Activated T-helper 2 cell treated with anti-CD3 and anti-CD28 coated beads, Interferon-gamma antibody, Interleukin-2, Interleukin-4, amounts not matched to agents 10 μg/mL and 5 μg/mL and 100 μg/mL, durations not matched to agents 14 hours and 24 hours and 36 hours (primary cell): ENCODE measurements at regions of chr14 and their contacts with region 1.

Region 1: DNA sequence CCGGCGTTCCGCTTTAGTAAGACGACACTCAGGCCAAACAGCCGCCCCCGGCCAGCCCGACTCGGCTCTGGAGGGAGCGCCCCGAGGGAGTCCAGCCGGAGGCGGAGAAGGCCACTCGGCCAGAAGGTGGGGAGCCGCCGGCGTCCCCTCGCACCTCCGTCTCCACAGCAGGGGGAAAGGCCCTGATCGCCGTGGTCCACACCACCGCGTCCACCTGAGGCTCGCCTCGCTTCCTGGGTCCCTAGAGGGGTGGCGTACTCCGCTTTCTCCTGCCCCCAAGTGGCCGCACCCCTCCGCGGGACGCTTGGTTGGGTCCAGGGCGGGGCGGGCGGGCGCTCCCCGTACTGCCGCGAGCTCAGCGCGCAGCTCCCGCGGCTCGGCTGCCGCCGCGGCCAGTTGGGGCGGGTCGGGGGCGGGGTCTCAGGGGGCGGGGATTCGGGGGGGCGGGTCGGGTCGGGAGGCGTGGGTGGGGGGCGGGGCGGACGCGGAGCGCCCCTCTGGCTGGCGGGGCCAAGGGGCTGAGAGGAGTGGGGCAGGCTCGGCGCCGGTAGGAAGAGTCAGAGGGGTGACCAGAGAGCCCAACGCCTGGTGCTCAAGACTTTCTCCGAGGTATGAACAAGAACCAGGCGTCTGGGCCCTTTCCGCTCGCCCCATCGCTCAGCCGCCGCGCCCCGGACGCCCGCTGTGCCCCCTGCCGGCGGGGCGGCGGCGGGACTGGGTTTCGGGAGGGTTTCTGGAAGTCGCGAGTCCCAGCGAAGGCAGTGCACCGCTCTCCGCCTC is at the start of gene FRMD6:
- DNase-seq: peak; percentile 78
- H3K4me3 Mint-ChIP-seq: peak within 1 kb of the TSS; percentile 84
- H3K27ac Mint-ChIP-seq: peak within 1 kb of the TSS; percentile 69
- H3K4me1 Mint-ChIP-seq: peaks cover 23% of the 10 kb centered on the region
- H3K27me3 Mint-ChIP-seq: peaks cover 11% of the 10 kb centered on the region
- total RNA-seq, gene FRMD6: 11.6 and 17.8 TPM in 2 replicates

Region 2: DNA sequence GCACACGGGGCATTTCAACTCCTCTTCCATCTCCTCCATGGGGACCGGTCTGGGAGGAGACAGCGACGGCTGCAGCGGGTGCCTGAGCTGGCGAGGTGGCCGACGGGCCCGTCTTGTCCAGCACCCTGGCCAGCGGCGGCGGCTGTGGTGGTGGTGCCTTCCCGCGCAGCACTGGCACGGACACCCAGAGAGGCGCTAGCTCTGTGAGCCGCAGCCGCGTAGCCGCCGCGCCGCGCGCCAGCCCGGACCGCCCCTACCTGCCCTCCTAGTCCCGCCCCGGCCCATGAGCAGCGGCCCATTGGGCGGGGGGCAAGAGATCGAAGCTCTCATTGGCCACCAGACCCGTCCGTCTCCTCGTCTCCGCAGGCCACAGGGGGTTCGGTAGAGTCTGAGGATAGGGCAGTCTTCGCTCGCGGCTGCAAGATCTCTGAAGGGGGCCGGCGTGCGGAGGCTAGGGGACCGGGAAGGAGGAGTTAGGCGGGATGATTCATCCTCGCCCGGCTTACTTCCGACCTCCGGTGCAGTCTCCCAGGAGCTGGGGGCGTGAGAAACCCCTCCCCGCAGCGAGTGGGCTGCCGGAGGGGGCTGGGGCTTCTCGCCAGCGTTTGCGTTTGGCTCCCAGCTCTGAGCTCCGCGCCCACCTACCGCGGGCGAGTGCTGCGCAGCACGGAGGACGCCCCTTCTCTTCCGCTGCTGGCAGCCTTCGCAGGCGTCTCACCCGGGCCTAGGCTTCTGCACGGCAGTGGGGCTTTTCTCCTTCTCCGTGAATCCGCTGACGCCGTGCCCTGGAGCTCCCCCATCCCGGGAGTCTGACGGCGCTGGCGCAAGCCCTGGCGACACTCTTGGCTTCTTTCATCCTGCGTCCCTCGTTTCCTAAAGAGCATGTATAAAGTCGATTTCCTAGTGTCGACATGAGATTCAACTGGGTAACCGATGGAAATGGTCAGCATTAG is 556.4 kb before region 1 on chr14 and contains the start of gene TRIM9:
- intact Hi-C with region 1: loop called (anchors 10 kb)
- DNase-seq: peak; percentile 88
- H3K4me3 Mint-ChIP-seq: peak within 1 kb of the TSS; percentile 82
- H3K27ac Mint-ChIP-seq: no peak within 1 kb of the TSS
- H3K4me1 Mint-ChIP-seq: peaks cover 15% of the 10 kb centered on the region
- H3K27me3 Mint-ChIP-seq: peaks cover 49% of the 10 kb centered on the region
- total RNA-seq, gene TRIM9: 0.46 TPM in 2 replicates

Region 3: DNA sequence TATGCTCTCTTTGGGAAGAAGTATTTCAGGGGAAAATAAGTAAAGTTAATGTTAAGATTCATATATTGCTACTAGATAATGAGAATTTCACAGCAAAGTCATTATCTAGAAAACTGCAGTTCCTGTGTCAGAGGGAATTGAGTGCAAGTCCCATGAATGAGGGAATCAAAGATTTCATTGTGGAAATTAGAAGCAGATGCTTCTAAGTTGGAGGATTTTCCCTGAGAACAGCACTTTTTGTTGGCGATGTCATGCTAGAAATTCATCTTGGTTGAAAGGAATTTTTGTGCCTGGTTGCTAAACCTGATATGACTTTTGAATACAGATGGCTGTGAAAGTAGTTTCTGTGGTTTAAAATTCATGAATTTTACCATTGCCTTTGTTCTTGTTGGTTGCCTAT is 25.7 kb after region 1 on chr14:
- intact Hi-C with region 1: loop called (anchors 2 kb)
- DNase-seq: no peak
- H3K4me3 Mint-ChIP-seq: no peak overlapping the region
- H3K27ac Mint-ChIP-seq: no peak overlapping the region
- H3K4me1 Mint-ChIP-seq: peaks cover 13% of the 10 kb centered on the region
- H3K27me3 Mint-ChIP-seq: peaks cover 1% of the 10 kb centered on the region

Region 4: DNA sequence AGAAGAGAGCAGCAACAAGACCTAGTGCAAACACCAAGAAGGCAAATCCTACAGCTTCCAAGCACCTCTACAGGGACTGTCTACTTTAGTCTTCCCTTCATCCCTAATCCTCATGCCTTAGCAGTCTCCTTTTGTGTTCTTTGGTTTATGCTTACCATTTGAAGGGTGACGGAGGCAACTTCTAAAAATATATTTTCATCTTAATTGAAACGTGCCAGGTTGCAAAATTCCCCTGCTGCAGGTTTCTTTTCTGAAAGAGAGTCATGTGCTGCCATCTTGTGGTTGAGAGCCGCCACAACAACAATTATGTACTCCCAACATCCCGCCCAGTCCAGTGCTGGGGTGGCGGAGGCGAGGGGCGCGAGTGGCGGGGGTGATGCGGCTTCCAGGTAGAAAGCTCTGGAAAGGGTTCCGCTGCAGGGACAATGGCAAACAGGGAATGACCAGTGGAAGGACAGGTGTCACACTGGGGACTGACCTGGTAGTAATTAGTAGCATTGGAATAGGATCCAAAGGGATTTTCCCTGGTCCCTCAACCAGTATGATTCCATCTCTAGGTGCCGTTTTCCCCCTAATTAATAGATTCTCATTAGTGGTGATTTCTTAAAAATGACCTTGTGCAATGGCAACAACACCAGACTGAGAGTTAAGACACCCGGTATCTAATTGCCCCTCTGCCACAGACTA is 128.6 kb after region 1 on chr14:
- intact Hi-C with region 1: loop called (anchors 2 kb)
- DNase-seq: peak; percentile 58
- H3K4me3 Mint-ChIP-seq: no peak overlapping the region
- H3K27ac Mint-ChIP-seq: no peak overlapping the region
- H3K4me1 Mint-ChIP-seq: peaks cover 12% of the 10 kb centered on the region
- H3K27me3 Mint-ChIP-seq: peaks cover 42% of the 10 kb centered on the region

Region 5: DNA sequence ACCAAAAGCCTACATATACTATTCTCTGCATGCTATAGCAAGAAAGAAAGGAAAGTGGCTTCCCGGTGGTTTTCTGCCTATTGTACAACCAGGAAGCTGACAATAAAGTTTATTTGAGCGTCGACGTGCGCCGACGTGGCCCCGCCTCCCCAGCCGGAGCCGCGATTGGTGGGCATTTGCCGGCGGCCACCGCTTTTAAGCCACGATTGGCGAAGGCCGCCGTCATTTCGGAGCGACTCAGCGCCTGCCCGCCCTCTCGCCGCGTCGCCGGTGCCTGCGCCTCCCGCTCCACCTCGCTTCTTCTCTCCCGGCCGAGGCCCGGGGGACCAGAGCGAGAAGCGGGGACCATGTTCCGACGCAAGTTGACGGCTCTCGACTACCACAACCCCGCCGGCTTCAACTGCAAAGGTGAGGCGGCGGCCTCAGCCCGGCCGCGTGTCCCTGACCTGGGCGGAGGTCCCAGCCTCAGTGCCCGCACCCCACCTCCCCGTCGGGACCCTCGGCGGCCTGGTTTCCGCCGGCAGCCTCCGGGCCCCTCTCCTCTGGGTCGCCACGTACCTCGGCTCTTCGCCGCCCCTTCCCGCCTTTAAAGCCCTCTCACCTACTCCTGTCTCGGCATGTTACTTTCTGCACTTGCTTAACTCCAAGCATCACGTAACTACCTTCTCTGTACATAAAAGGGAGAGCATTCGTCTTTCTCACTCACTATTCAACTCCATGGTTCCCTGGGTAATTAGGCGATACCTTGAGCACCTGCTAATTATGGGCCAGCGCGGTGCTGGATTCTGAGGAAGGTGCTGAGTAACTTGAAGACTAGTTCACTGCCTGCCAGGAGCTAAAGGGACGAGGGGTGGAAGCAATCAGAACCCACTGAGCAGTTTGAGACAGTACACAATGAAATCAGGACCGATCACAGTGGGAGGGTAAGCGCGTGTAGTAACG is 338.0 kb after region 1 on chr14 and contains the start of gene RTRAF:
- intact Hi-C with region 1: loop called (anchors 5 kb)
- DNase-seq: peak; percentile 91
- H3K4me3 Mint-ChIP-seq: peak within 1 kb of the TSS; percentile 95
- H3K27ac Mint-ChIP-seq: peak within 1 kb of the TSS; percentile 90
- H3K4me1 Mint-ChIP-seq: peaks cover 31% of the 10 kb centered on the region
- H3K27me3 Mint-ChIP-seq: peaks cover 2% of the 10 kb centered on the region
- total RNA-seq, gene RTRAF: 192 and 212 TPM in 2 replicates